Transverse colon (tissue), 4 donors: ENCODE measurements at regions of chr9 and their contacts with region 1.

Region 1: DNA sequence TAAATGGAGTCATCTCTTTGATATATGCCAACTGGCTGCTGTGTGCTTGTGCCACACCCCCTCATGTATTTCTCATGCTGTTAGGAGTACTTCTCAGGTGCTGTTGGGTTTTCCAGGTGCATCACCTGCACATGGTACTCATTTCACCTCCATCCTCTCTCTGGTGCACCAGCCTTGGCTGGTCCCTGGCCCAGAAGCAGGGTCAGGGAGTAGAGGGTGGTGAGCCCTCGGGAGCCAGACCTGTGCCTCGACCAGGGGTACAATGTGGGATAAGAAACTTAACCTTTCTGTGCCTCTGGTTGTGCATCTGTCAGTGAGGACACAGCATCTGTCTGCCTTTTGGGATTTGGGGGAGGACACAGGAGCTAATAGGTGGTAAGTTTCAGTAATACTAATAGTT is 38.5 kb downstream of the SECISBP2 start:
- DNase-seq: no peak
- H3K4me3 ChIP-seq: no peak overlapping the region
- H3K27ac ChIP-seq: no peak overlapping the region
- H3K4me1 ChIP-seq: no peaks in the 10 kb centered on the region
- H3K27me3 ChIP-seq: no peaks in the 10 kb centered on the region
- CTCF ChIP-seq: no peak
- EP300 ChIP-seq: no peak
- POLR2A ChIP-seq: no peak

Region 2: DNA sequence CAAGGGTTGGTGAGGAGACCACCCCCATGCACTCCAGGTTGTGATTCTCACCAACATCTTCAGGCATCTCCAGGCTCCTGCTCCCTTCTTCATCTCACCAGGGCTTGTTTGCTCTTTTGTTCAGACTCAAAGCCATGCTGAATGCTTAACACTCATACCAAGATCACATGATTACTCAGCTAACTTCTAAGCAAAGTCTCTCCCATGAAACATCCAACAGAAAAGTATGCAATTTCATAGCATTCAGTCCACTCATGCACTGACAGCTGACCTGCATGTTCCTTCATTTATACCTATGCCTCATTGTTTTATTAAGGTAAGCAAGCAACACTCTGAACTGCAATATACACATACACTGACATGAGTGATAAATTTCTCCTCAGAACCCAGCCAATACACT is 247.1 kb before region 1 on chr9:
- in situ Hi-C with region 1: no loop called
- intact Hi-C with region 1: no loop called
- DNase-seq: no peak
- H3K4me3 ChIP-seq: no peak overlapping the region
- H3K27ac ChIP-seq: no peak overlapping the region
- H3K4me1 ChIP-seq: no peaks in the 10 kb centered on the region
- H3K27me3 ChIP-seq: no peaks in the 10 kb centered on the region
- CTCF ChIP-seq: no peak
- EP300 ChIP-seq: no peak
- POLR2A ChIP-seq: no peak

Region 3: GRCh38 chr9:89334151-89334550 is 22.6 kb before region 1 on chr9:
- in situ Hi-C with region 1: no loop called
- intact Hi-C with region 1: loop called (anchors 1 kb)
- DNase-seq: no peak
- H3K4me3 ChIP-seq: no peak overlapping the region
- H3K27ac ChIP-seq: no peak overlapping the region
- H3K4me1 ChIP-seq: no peaks in the 10 kb centered on the region
- H3K27me3 ChIP-seq: no peaks in the 10 kb centered on the region
- CTCF ChIP-seq: no peak
- EP300 ChIP-seq: no peak
- POLR2A ChIP-seq: no peak

Region 4: GRCh38 chr9:89437000-89437631 is 80.3 kb after region 1 on chr9:
- in situ Hi-C with region 1: no loop called
- intact Hi-C with region 1: no loop called
- DNase-seq: peak; percentile 81
- H3K4me3 ChIP-seq: no peak overlapping the region
- H3K27ac ChIP-seq: peak overlapping the region; percentile 33 to 78 (median 56)
- H3K4me1 ChIP-seq: peaks cover 24 to 63% (median 41%) of the 10 kb centered on the region in 4 donors
- H3K27me3 ChIP-seq: no peaks in the 10 kb centered on the region
- CTCF ChIP-seq: no peak
- EP300 ChIP-seq: no peak
- POLR2A ChIP-seq: no peak